AG04449 (cell line): ENCODE measurements at regions of chr12 and their contacts with region 1.

Region 1: GRCh38 chr12:45762185-45763110 is 32.9 kb downstream of the ARID2 start:
- DNase-seq: peak; percentile 10
- H3K4me3 ChIP-seq: no peak overlapping the region
- CTCF ChIP-seq: peak; percentile 65

Region 2: DNA sequence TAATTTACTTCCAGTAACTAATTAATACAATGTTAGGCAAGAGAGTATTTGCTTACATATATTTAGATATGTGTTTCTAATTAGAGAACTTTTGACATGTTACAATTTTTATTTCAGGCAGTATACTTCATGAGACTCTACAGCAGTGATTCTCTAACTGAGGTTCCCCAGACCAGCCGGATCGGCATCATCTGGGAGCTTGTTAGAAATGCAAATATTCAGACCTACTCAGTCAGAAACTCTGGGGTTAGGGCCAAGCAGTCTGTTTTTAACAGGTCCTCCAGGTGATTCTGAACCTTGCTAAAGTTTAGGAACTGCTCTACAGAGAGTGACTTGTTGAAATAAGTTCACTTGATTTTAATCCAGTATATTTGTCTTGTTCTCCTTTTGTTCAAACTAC is 13.5 kb after region 1 on chr12:
- CTCF ChIA-PET with region 1: interaction called, 20 read pairs
- POLR2A ChIA-PET with region 1: no interaction called
- DNase-seq: no peak
- H3K4me3 ChIP-seq: no peak overlapping the region
- CTCF ChIP-seq: no peak